Activated T-helper 2 cell treated with anti-CD3 and anti-CD28 coated beads, Interferon-gamma antibody, Interleukin-2, Interleukin-4, amounts not matched to agents 10 μg/mL and 5 μg/mL and 100 μg/mL, durations not matched to agents 14 hours and 24 hours and 36 hours (primary cell): ENCODE measurements at regions of chr13 and their contacts with region 1.

Region 1: DNA sequence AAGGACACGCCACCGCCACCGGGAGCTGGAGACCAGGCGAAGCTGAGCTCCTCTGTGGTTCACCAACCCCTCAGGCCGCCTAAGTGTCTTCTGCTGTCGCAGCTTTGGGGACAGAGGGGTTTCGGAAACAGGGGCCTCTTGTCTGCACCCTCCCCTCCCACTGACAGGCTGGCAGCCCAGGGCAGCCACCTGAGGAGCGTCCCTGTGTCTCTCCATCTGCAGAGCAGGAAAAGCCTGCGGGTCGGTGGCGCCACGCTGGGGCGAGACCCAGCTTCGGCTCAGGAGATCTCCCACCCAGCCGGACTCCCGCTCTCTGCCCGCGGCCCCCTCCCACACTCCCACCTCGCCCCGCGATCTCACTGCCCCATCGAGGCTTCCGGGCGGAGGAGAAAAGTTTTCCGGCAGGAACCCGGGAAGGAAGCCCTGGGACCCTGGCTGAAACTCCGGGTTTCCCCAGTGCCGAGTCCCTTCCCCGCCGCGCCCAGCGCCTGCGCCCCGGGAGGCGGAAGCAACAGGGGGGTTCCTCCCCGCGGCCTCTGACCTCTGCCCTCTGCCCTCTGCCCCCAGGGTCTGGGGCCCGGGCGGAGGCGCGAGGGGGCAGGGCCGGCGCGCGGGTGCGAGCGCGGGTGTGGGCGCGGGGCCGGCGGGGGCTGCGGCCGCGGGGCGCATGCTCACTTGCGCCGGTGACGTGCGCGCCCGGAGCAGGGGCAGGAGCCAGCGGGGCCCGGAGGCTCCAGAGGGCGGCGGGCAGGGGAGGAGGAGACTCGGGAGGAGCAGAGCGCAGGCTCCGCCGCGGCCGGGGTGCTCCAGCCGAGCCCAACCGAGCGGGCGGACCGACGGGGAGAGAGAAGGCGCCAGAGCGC is at the start of gene ATP11A:
- DNase-seq: peak; percentile 81
- H3K4me3 Mint-ChIP-seq: peak within 1 kb of the TSS; percentile 87
- H3K27ac Mint-ChIP-seq: peak within 1 kb of the TSS; percentile 95
- H3K4me1 Mint-ChIP-seq: peaks cover 44% of the 10 kb centered on the region
- H3K27me3 Mint-ChIP-seq: no peaks in the 10 kb centered on the region
- total RNA-seq, gene ATP11A: 72.0 and 75.2 TPM in 2 replicates

Region 2: GRCh38 chr13:112489199-112489598 is 200.3 kb before region 1 on chr13:
- intact Hi-C with region 1: no loop called
- DNase-seq: no peak
- H3K4me3 Mint-ChIP-seq: no peak overlapping the region
- H3K27ac Mint-ChIP-seq: no peak overlapping the region
- H3K4me1 Mint-ChIP-seq: no peaks in the 10 kb centered on the region
- H3K27me3 Mint-ChIP-seq: no peaks in the 10 kb centered on the region

Region 3: GRCh38 chr13:112587212-112587763 is 102.2 kb before region 1 on chr13:
- intact Hi-C with region 1: loop called (anchors 2 kb)
- DNase-seq: peak; percentile 56
- H3K4me3 Mint-ChIP-seq: peak overlapping the region; percentile 98
- H3K27ac Mint-ChIP-seq: peak overlapping the region; percentile 93
- H3K4me1 Mint-ChIP-seq: peaks cover 28% of the 10 kb centered on the region
- H3K27me3 Mint-ChIP-seq: no peaks in the 10 kb centered on the region

Region 4: DNA sequence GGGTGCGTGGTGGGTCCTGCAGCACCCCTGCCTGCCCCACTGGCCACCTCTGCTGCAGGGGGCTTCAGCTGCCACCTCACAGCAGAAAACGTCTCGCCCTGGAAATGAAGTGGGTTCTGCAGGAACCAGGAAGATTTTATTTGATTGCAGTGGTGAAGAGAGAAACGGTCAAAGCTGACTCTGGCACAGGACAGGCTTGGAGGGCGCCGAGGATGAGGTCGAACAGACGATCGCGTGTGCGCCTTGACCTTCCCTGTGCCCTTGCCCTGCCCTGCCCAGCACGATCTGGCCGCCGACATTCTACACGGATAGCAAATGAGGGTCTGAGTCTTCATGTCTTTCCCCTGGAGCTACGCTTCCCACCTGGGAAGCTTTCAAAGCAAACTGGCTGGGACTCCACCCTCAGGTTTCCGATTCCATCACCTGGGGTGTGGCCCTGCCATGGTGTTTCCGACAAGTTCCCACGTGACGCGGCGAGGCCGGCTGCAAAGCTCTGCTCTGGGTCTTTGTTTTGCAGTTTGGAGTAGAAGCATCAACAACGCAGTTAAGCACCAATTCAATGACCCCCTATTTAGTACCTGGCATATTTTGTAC is 51.3 kb before region 1 on chr13:
- intact Hi-C with region 1: loop called (anchors 1 kb)
- DNase-seq: no peak
- H3K4me3 Mint-ChIP-seq: no peak overlapping the region
- H3K27ac Mint-ChIP-seq: no peak overlapping the region
- H3K4me1 Mint-ChIP-seq: peaks cover 9% of the 10 kb centered on the region
- H3K27me3 Mint-ChIP-seq: peaks cover 15% of the 10 kb centered on the region

Region 5: DNA sequence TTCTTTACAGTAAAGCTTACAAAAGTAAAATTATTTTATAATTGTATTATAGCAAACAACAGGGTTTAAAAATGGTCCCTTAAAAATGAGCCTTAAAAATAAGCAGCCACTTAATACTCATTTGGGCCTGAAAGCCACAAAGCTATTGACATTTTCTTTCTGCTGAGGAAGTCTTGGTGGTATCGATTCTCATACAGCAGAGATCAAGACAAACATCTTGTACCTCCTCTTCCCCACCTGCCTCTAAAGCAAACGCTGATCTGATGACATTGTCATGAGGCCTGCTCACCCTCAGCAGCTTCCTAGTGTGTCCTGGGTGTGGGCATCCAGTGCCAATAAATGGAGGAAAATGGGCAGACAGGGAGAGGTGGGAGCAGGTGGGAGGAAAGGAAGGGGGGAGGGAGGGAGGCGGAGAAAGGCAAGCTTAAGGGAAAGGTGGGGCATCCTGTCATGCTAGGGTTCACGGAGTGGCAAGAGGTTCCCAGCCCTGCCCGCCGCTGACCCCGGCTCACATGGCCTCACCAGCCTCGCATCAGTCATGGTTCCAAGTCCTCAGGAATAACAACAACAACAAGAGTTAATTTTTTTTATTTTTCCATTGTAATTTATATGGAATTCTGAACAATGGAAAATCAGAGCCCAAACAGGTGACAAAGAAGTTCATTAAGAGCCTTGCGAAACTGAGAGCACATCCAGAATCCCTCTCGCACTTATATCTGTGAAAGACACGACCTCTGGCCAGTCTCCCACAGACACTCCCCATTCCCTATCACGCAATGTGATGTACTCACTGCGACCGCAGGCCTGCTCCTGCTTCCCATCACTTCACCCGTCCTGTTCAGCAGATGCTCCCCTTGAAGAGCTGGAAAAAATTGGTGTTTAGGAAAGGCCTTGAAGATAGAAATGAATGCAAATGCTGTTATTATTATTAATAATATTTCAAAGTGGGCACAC is 14.8 kb before region 1 on chr13:
- intact Hi-C with region 1: loop called (anchors 1 kb)
- DNase-seq: no peak
- H3K4me3 Mint-ChIP-seq: no peak overlapping the region
- H3K27ac Mint-ChIP-seq: no peak overlapping the region
- H3K4me1 Mint-ChIP-seq: peaks cover 14% of the 10 kb centered on the region
- H3K27me3 Mint-ChIP-seq: peaks cover 2% of the 10 kb centered on the region

Region 6: GRCh38 chr13:112711528-112712265 is 22.2 kb after region 1 on chr13:
- intact Hi-C with region 1: no loop called
- DNase-seq: no peak
- H3K4me3 Mint-ChIP-seq: no peak overlapping the region
- H3K27ac Mint-ChIP-seq: no peak overlapping the region
- H3K4me1 Mint-ChIP-seq: peaks cover 3% of the 10 kb centered on the region
- H3K27me3 Mint-ChIP-seq: no peaks in the 10 kb centered on the region

Region 7: DNA sequence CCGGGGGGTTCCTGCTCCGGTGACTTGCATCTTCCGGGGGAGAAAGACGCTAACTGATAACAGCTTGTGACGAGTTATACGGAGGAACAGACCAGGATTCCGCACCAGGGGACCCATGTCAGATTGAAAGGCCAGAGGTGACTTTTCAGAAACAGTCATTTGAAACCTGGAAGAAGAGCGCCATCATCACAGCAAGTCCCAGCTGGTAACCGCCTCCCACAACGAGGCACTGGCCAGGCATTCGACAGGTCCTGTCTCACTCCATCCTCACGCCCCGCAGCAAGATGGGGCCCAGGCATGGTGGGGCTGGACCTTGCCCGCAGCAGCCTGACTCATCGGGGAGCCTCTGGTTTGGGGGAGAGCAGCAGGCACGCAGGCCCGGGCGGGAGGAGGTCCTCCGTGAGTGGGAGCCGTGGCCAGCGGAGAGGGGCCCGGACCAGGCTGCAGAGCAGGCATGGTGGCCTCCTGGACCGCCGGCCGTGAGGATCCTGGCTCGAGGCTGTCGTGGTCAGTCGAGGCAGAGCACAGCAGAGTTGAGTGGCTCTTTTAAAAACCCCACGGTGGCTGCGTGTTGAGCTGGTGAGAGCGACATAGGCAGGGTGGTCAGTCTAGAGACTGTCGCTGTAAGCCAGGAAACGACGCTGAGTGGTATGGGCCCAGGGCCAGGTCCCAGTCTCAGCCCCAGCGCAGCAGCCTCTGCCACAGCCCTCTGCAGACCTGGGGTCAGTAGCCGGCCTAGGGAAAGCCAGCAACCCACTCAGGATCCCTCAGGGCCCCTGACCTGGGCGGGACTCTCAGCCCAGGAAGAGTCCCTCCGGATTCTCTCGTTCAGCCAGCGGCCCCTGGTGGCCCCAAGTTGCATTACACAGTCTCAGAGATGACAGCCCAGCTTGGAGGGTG is 184.6 kb after region 1 on chr13:
- intact Hi-C with region 1: loop called (anchors 2 kb)
- DNase-seq: peak; percentile 44
- H3K4me3 Mint-ChIP-seq: no peak overlapping the region
- H3K27ac Mint-ChIP-seq: peak overlapping the region; percentile 79
- H3K4me1 Mint-ChIP-seq: peaks cover 14% of the 10 kb centered on the region
- H3K27me3 Mint-ChIP-seq: no peaks in the 10 kb centered on the region

Region 8: DNA sequence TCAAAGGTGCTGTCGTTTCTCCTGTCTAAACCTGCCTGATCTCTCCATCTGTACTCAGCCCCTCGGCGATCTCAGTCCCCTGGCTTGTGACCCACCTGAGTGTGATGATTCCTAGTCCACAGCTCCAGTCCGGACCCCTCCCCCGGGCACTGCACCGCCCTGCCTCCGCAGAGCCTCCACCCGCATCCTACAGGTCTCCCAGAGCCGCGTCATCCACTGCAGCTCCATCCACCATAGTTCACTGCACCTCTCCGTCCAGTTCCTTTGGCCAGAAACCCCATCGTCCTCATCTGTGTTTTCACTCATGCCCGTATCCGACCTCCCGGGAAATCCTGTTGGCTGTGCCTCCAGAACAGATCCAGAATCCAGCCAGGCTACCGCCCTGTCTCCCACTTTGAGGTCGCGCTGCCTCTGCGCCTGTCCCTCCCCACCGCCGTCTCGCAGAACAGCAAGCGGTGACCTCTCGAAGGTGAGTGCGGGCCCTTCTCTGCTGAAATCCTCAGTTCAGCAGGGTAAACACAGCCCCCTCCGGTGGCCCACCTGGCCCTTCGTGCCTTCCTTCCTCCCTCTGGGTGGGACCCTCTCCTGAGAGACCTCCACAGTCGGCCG is 227.6 kb after region 1 on chr13:
- intact Hi-C with region 1: no loop called
- DNase-seq: no peak
- H3K4me3 Mint-ChIP-seq: no peak overlapping the region
- H3K27ac Mint-ChIP-seq: no peak overlapping the region
- H3K4me1 Mint-ChIP-seq: no peaks in the 10 kb centered on the region
- H3K27me3 Mint-ChIP-seq: no peaks in the 10 kb centered on the region